GM23248 (cell line): ENCODE measurements at regions of chr1 and their contacts with region 1.

Region 1: DNA sequence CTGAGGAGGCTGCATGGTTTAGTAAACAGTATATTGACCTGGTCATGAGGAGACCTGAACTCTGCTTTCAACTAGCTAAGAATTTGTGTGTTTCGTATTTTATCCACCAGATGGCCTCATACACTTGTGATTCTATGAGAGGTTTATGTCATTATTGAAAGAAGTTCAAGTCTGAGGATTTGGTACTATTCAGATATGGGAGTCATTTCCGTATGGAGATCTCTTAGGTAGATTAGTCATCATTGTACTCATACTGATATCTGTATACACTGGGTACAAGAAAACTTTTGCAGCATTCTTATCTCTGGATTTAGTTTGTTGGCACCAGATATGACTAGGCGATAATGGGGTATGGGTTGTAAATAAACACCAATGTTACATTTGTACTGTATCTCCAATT is 26.6 kb downstream of the ATF6 start:
- DNase-seq: peak; percentile 83
- H3K4me3 ChIP-seq: no peak overlapping the region
- H3K27ac ChIP-seq: no peak overlapping the region
- H3K4me1 ChIP-seq: peaks cover 11% of the 10 kb centered on the region
- H3K27me3 ChIP-seq: no peaks in the 10 kb centered on the region

Region 2: DNA sequence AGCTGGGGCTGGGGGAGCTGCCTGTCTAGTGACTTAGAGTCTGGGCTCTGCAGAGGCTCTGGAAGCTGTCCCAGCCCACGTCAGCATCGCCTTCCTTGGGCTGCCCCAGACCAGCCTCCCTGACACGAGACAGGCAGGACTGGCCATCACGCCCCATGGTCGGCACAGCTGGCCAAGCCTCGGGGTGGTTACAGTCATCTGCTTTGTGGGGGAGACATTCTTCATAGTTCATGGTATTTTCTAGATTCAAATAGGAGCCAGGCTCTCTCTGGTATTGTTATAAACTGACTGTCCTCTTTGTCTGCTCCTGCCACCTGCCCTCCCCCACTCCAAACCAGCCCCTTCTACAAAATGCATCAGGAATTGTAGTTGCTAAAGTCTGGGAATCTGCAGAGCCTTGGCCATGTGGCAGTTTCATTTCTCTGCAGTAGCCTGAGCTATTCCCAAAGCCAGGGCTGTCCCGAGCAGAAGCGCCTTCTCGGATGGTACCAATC is 201.5 kb after region 1 on chr1:
- in situ Hi-C with region 1: no loop called
- DNase-seq: peak; percentile 73
- H3K4me3 ChIP-seq: no peak overlapping the region
- H3K27ac ChIP-seq: no peak overlapping the region
- H3K4me1 ChIP-seq: peaks cover 4% of the 10 kb centered on the region; the same call in 1 of the 2 replicates
- H3K27me3 ChIP-seq: no peaks in the 10 kb centered on the region

Region 3: DNA sequence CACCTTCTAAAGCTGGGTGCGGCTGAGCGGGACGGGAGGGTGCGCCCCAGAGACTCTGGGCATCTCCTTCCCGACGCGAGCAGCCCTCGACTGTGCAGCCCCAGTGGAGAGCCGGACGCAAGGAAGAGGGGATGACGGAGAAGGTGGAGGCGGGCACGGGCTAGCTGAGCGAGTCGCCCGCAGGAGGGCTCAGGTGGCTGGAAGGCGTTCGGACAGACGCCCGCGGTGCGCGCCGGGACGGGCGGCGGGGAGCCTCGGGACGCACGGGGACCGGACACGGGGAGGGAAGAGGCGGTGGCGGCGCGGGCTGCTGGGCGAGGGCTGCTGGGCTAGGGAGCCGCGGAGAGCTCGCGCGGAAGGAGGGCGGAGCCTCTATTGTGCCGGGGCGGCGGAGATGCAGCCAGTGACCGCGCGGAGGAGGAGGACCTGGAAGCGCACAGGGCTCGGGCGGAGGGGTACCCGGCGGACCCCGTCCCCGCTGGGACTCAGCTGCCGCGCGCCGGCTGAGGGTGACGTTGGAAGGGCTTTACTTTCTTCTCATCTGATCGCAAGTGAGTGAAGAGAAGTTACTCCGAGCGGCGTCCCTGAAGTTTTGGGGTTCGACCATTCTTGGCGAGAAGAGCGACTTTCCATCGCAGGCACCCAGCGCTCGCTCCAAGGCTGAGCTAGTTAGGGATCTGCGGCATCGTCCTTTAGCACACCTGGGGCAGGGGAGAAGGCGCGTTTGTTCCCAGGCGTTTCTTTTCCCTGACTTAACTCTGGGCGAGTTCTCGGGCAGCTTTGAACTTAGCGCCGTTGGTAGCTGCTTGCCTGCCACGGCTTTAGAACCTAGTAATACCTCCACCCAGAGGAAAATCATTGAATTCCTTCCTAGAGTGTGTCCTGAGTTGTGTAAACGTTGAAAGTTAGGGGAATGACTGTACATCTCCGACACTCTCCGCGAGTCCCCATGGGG is 231.1 kb after region 1 on chr1 and contains the start of gene OLFML2B:
- in situ Hi-C with region 1: loop called (anchors 10 kb)
- DNase-seq: peak; percentile 94
- H3K4me3 ChIP-seq: peak within 1 kb of the TSS; percentile 81
- H3K27ac ChIP-seq: no peak within 1 kb of the TSS
- H3K4me1 ChIP-seq: peaks cover 6% of the 10 kb centered on the region; the same call in 1 of the 2 replicates
- H3K27me3 ChIP-seq: peaks cover 5% of the 10 kb centered on the region; the same call in 1 of the 2 replicates
- total RNA-seq, gene OLFML2B: 1.1 and 1.4 TPM in 2 replicates